Activated CD4-positive, alpha-beta memory T cell treated with anti-CD3 and anti-CD28 coated beads for 36 hours (primary cell): ENCODE measurements at regions of chr13 and their contacts with region 1.

Region 1: GRCh38 chr13:44917589-44918325 is 71.5 kb downstream of the NUFIP1 start:
- DNase-seq: peak; percentile 97
- H3K4me3 Mint-ChIP-seq: no peak overlapping the region
- H3K27ac Mint-ChIP-seq: no peak overlapping the region
- H3K4me1 Mint-ChIP-seq: no peaks in the 10 kb centered on the region
- H3K27me3 Mint-ChIP-seq: no peaks in the 10 kb centered on the region

Region 2: GRCh38 chr13:44435142-44435982 is 482.4 kb before region 1 on chr13:
- CTCF ChIA-PET with region 1: no interaction called
- POLR2A ChIA-PET with region 1: no interaction called
- intact Hi-C with region 1: loop called (anchors 2 kb)
- DNase-seq: peak; percentile 93
- H3K4me3 Mint-ChIP-seq: peak overlapping the region; percentile 64
- H3K27ac Mint-ChIP-seq: peak overlapping the region; percentile 39
- H3K4me1 Mint-ChIP-seq: peaks cover 17% of the 10 kb centered on the region
- H3K27me3 Mint-ChIP-seq: peaks cover 9% of the 10 kb centered on the region

Region 3: GRCh38 chr13:44648392-44649103 is 269.2 kb before region 1 on chr13:
- CTCF ChIA-PET with region 1: no interaction called
- POLR2A ChIA-PET with region 1: no interaction called
- intact Hi-C with region 1: loop called (anchors 1 kb)
- DNase-seq: peak; percentile 22
- H3K4me3 Mint-ChIP-seq: no peak overlapping the region
- H3K27ac Mint-ChIP-seq: no peak overlapping the region
- H3K4me1 Mint-ChIP-seq: peaks cover 16% of the 10 kb centered on the region
- H3K27me3 Mint-ChIP-seq: peaks cover 23% of the 10 kb centered on the region

Region 4: DNA sequence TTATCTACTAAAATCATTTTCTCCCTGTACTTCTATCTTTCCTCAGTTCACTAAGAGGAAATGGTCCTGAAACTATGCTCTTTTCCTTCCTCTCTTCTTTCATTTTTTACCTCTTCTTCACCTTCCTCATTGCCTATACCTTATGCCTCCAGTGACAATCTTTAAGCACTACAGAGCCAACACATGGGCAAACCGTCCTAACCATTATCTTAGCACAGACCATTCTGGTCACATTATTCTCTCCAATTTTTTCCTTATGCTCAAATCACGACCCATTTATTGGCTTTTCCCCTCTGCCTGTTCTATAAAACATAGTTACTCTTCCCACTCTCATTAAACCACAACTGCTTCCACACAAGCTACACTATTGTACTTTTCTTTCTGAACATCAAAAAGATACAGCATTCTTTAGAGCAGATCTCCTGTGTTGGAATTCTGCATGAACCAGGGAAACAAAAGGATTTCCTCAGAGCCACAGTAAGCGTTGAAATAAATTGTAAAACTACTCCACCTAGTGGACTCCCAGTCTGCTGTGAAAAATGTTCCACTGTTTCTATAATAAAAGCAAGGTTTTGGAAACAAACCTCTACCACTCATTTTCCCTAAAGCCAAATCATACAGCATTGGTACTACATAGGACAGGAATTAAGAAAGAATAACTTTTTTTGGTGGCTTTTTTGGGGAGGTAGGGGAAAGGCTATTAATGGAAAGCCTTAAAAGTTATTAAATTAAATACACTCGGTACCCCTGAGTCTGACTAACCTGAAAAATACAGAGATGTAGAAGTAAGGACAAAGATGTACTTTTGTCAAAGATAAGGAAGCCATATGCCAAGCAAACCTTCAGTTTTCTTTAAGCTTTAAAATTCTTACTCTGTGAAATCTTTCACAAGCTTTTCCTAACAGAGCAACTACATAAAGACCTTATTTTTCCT is 52.1 kb after region 1 on chr13:
- CTCF ChIA-PET with region 1: interaction called, 7 read pairs
- POLR2A ChIA-PET with region 1: no interaction called
- intact Hi-C with region 1: loop called (anchors 5 kb)
- DNase-seq: no peak
- H3K4me3 Mint-ChIP-seq: no peak overlapping the region
- H3K27ac Mint-ChIP-seq: no peak overlapping the region
- H3K4me1 Mint-ChIP-seq: peaks cover 3% of the 10 kb centered on the region
- H3K27me3 Mint-ChIP-seq: no peaks in the 10 kb centered on the region

Region 5: GRCh38 chr13:45249662-45250061 is 331.9 kb after region 1 on chr13:
- CTCF ChIA-PET with region 1: no interaction called
- POLR2A ChIA-PET with region 1: no interaction called
- intact Hi-C with region 1: no loop called
- DNase-seq: no peak
- H3K4me3 Mint-ChIP-seq: no peak overlapping the region
- H3K27ac Mint-ChIP-seq: no peak overlapping the region
- H3K4me1 Mint-ChIP-seq: no peaks in the 10 kb centered on the region
- H3K27me3 Mint-ChIP-seq: no peaks in the 10 kb centered on the region

Region 6: GRCh38 chr13:45340926-45341750 is 423.4 kb after region 1 on chr13 and contains the start of gene TPT1:
- CTCF ChIA-PET with region 1: no interaction called
- POLR2A ChIA-PET with region 1: no interaction called
- intact Hi-C with region 1: loop called (anchors 1 kb)
- DNase-seq: peak; percentile 100
- H3K4me3 Mint-ChIP-seq: peak within 1 kb of the TSS; percentile 94
- H3K27ac Mint-ChIP-seq: peak within 1 kb of the TSS; percentile 99
- H3K4me1 Mint-ChIP-seq: peaks cover 45% of the 10 kb centered on the region
- H3K27me3 Mint-ChIP-seq: no peaks in the 10 kb centered on the region
- total RNA-seq, gene TPT1: 3,227 to 3,264 TPM